ENCODE measurements at regions of chr2 and their contacts with region 1.

Region 1: DNA sequence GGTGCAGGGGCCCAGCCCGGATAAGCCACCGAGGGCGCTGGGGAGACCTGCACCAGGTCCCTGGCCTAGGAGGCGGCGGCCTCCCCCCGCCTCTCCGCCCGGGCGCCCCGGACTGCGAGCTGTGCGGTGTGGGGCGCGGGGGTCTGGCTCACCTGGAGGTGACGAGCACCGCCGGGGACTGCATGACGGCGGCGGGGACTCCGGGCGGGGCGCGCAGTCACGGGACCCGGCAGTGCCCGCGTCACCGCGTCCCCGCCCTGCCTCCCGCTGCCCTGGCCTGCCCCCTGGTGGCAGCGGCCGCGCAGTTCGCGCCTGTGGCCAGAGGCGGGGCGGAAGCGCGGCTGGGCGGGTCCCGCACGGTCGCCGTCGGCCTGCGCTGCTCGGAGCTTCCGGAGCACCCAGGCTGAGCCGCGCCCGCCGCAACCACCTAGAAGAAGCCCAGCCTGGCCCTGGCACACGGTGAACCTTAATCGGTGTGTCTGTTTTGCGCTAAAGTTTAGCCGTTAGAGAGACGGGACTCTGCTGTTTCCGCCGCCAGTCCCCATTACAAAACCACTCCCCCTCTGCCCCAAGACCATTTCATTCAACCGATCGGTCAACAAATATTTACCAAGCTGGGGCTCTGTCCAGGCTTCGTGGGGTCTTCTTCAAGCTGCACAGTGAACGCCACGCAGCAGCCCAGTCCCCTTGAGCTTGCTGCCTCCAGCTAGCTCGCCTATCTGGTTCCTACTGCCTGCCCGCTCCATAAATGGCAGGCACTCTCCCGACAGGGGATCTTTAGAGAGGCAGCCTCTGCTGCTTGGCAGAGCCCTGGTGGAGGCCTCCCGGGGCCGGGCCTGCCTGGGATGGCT is at the start of gene HS1BP3:
- DNase-seq: peak; percentile 87 to 96 (median 91)
- H3K4me3 ChIP-seq: peak within 1 kb of the TSS; percentile 96
- H3K4me3 Mint-ChIP-seq: peak within 1 kb of the TSS; percentile 85 to 92 (median 88)
- H3K27ac ChIP-seq: peak within 1 kb of the TSS; percentile 95
- H3K27ac Mint-ChIP-seq: peak within 1 kb of the TSS; percentile 87 to 98 (median 97)
- H3K4me1 ChIP-seq: peaks cover 19% of the 10 kb centered on the region
- H3K4me1 Mint-ChIP-seq: peaks cover 30 to 44% (median 38%) of the 10 kb centered on the region in 3 donors
- H3K27me3 ChIP-seq: no peaks in the 10 kb centered on the region
- H3K27me3 Mint-ChIP-seq: peaks cover 0 to 4% of the 10 kb centered on the region in 2 donors
- total RNA-seq, gene HS1BP3: 9.3 to 9.5 TPM

Region 2: GRCh38 chr2:20411361-20411894 is 239.7 kb before region 1 on chr2:
- CTCF ChIA-PET with region 1: interaction called, 13 read pairs
- POLR2A ChIA-PET with region 1: no interaction called
- DNase-seq: peak; percentile 46 to 76 (median 55)
- H3K4me3 ChIP-seq: no peak overlapping the region
- H3K4me3 Mint-ChIP-seq: no peak overlapping the region
- H3K27ac ChIP-seq: no peak overlapping the region
- H3K27ac Mint-ChIP-seq: no peak overlapping the region
- H3K4me1 ChIP-seq: no peaks in the 10 kb centered on the region
- H3K4me1 Mint-ChIP-seq: peaks cover 0 to 2% (median 0%) of the 10 kb centered on the region in 3 donors
- H3K27me3 ChIP-seq: no peaks in the 10 kb centered on the region
- H3K27me3 Mint-ChIP-seq: peaks cover 11 to 12% of the 10 kb centered on the region in 2 donors

Region 3: DNA sequence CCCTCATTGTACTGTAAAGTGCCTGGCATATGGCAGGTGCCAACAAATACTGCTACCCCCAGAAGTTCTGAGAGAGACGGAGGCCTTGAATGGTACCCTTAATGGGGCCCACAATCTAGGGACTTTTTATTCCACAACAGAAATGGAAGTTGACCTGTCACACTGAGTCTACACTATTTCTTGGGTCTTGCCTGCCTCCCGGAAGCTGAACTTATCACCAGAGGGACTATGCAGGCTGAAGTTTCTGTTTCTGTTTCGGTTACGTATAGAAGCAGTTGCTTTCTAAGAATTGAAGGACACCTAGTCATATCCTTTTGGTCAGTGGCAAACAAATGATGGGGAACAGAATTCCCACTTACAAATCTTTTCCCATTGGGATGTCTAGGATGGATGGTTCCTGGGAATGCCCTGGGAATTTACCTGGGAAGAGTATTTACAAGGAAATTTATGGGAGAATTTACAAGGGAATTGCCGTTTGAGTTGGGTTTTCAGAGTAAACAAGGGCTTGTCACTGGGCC is 74.4 kb before region 1 on chr2:
- CTCF ChIA-PET with region 1: interaction called, 10 read pairs
- POLR2A ChIA-PET with region 1: interaction called, 4 read pairs
- DNase-seq: peak in 4 of 5 donors; percentile 10 to 65 (median 42)
- H3K4me3 ChIP-seq: peak overlapping the region; percentile 75
- H3K4me3 Mint-ChIP-seq: peak overlapping the region; percentile 73 to 89 (median 84)
- H3K27ac ChIP-seq: peak overlapping the region; percentile 60
- H3K27ac Mint-ChIP-seq: peak overlapping the region; percentile 82 to 97 (median 95)
- H3K4me1 ChIP-seq: peaks cover 19% of the 10 kb centered on the region
- H3K4me1 Mint-ChIP-seq: peaks cover 14 to 17% (median 16%) of the 10 kb centered on the region in 3 donors
- H3K27me3 ChIP-seq: no peaks in the 10 kb centered on the region
- H3K27me3 Mint-ChIP-seq: no peaks in the 10 kb centered on the region

Region 4: GRCh38 chr2:20633794-20634506 is 17.2 kb before region 1 on chr2:
- CTCF ChIA-PET with region 1: interaction called, 17 read pairs
- POLR2A ChIA-PET with region 1: no interaction called
- DNase-seq: no peak
- H3K4me3 ChIP-seq: no peak overlapping the region
- H3K4me3 Mint-ChIP-seq: no peak overlapping the region
- H3K27ac ChIP-seq: no peak overlapping the region
- H3K27ac Mint-ChIP-seq: peak overlapping the region in 1 of 8 donors; percentile 60
- H3K4me1 ChIP-seq: no peaks in the 10 kb centered on the region
- H3K4me1 Mint-ChIP-seq: peaks cover 0 to 4% (median 0%) of the 10 kb centered on the region in 3 donors
- H3K27me3 ChIP-seq: no peaks in the 10 kb centered on the region
- H3K27me3 Mint-ChIP-seq: no peaks in the 10 kb centered on the region

Region 5: DNA sequence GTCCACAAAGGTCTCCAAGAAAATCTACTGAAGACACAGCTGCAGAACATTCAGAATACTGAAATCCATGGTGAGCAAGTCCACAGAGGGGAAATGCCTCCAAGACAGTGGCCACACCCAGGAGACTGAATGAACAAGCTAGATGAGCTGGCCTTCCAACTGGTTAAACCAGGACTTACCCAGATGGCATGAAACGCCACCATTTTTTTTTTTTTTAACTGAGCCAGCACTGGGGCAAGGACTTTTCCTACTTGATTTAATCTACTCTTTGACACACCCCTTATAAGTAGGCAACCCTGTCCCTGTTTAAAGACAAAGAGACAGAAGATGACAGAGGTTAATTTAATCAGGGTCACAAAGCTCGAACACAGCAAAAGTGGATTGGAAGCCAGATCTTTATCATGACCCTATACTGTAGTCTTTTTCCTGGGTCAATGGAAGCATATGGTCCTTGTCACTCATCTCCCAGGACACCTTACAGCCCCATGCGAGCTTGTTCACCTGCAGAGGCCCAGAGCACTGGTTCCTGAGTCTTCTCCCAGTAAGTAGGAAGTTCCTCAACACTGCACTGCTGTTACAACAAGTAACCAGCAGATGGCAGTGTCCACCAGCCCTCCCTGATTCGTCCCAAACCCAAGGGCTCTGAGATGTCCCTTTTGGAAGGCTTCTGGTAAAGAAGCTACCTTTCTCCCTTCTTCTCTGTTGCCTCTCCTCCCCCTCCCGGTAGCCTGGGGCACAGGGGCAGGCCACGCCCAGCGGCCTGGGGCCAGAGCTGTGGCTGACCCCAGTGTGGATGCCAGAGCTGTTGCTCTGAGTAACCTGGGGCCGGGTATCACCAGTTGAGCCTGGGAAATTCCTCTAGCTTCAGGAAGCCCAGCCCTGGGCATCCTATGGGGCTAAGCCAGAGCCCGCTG is 10.2 kb after region 1 on chr2:
- CTCF ChIA-PET with region 1: interaction called, 67 read pairs
- POLR2A ChIA-PET with region 1: interaction called, 7 read pairs
- DNase-seq: peak; percentile 35 to 77 (median 58)
- H3K4me3 ChIP-seq: no peak overlapping the region
- H3K4me3 Mint-ChIP-seq: no peak overlapping the region
- H3K27ac ChIP-seq: no peak overlapping the region
- H3K27ac Mint-ChIP-seq: peak overlapping the region in 1 of 8 donors; percentile 23
- H3K4me1 ChIP-seq: peaks cover 4% of the 10 kb centered on the region
- H3K4me1 Mint-ChIP-seq: peaks cover 4 to 16% (median 7%) of the 10 kb centered on the region in 3 donors
- H3K27me3 ChIP-seq: peaks cover 42% of the 10 kb centered on the region
- H3K27me3 Mint-ChIP-seq: peaks cover 39 to 81% of the 10 kb centered on the region in 2 donors

Region 6: DNA sequence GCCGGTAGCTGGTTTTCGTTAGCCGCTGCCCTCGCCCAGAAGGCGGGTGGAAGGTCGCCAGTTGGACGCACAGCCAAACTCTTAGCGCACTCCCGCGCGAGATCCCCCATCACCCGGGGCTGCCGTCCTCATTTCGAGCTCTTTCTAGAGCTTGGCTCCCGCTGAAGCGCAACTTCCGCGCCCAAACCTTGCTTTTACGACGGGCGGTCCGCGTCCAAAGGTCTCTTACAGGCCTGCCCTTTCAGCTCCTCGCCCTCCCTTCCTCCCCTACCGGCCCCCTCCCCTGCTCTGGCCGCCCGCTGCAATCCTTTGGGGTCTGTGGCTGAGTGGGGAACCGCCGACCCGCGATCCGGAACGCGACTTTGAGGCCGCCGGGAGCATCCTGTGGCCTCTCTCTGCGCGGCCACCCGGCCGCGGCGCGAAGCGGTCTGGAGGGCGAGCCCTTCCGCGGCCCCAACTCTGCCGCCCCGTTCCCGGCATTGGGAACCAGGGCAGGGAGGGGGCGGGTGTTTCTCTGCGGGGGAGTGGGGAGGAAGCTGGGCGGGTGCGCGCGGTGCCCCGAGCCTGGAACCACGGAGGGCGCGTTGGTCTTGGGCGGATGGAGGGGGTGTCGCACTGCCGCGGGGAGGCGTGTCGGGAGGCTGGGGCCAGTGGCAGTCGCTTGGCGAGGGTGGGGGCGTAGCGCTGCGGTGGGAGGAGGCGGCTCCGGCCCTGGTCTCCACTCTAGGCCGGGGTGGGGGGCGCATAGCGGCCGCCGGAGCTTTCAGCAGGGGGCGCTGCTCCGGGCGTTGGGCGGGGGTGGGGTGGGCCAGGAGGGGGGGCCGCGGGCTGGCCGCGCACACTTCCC is 15.4 kb after region 1 on chr2 and contains the start of gene GDF7:
- CTCF ChIA-PET with region 1: interaction called, 67 read pairs
- POLR2A ChIA-PET with region 1: interaction called, 7 read pairs
- DNase-seq: peak in 1 of 5 donors; percentile 18
- H3K4me3 ChIP-seq: peak within 1 kb of the TSS; percentile 39
- H3K4me3 Mint-ChIP-seq: peak within 1 kb of the TSS; percentile 75 to 89 (median 82)
- H3K27ac ChIP-seq: no peak within 1 kb of the TSS
- H3K27ac Mint-ChIP-seq: peak within 1 kb of the TSS in 1 of 8 donors; percentile 55
- H3K4me1 ChIP-seq: peaks cover 11% of the 10 kb centered on the region
- H3K4me1 Mint-ChIP-seq: peaks cover 11 to 45% (median 18%) of the 10 kb centered on the region in 3 donors
- H3K27me3 ChIP-seq: peaks cover 70% of the 10 kb centered on the region
- H3K27me3 Mint-ChIP-seq: peaks cover 52 to 78% of the 10 kb centered on the region in 2 donors
- total RNA-seq, gene GDF7: not detected